Activated CD8-positive, alpha-beta T cell treated with anti-CD3 and anti-CD28 coated beads, Interleukin-2, amount 10 ng/mL, durations not matched to agents 7 days and 5 days (primary cell): ENCODE measurements at regions of chr20 and their contacts with region 1.

Region 1: GRCh38 chr20:17421493-17421892 is 109.7 kb downstream of the BFSP1 start:
- DNase-seq: no peak
- ATAC-seq: no peak
- H3K4me3 Mint-ChIP-seq: no peak overlapping the region
- H3K27ac Mint-ChIP-seq: no peak overlapping the region
- H3K4me1 Mint-ChIP-seq: no peaks in the 10 kb centered on the region
- H3K27me3 Mint-ChIP-seq: peaks cover 2% of the 10 kb centered on the region

Region 2: GRCh38 chr20:17406051-17406590 is 15.4 kb before region 1 on chr20:
- CTCF ChIA-PET with region 1: no interaction called
- POLR2A ChIA-PET with region 1: no interaction called
- DNase-seq: no peak
- ATAC-seq: no peak
- H3K4me3 Mint-ChIP-seq: no peak overlapping the region
- H3K27ac Mint-ChIP-seq: no peak overlapping the region
- H3K4me1 Mint-ChIP-seq: no peaks in the 10 kb centered on the region
- H3K27me3 Mint-ChIP-seq: peaks cover 2% of the 10 kb centered on the region

Region 3: GRCh38 chr20:17431621-17432364 is 10.3 kb after region 1 on chr20:
- CTCF ChIA-PET with region 1: interaction called, 17 read pairs
- POLR2A ChIA-PET with region 1: no interaction called
- DNase-seq: peak; percentile 63
- ATAC-seq: peak; percentile 42
- H3K4me3 Mint-ChIP-seq: no peak overlapping the region
- H3K27ac Mint-ChIP-seq: no peak overlapping the region
- H3K4me1 Mint-ChIP-seq: no peaks in the 10 kb centered on the region
- H3K27me3 Mint-ChIP-seq: peaks cover 4% of the 10 kb centered on the region